Activated B cell treated with CpG ODN at 0.5 μM for 24 hours (primary cell): ENCODE measurements at regions of chr10 and their contacts with region 1.

Region 1: GRCh38 chr10:28381903-28382347 is 79.1 kb upstream of the MPP7 start:
- DNase-seq: peak; percentile 45
- ATAC-seq: peak; percentile 93
- H3K4me3 Mint-ChIP-seq: no peak overlapping the region
- H3K27ac Mint-ChIP-seq: no peak overlapping the region
- H3K4me1 Mint-ChIP-seq: peaks cover 6% of the 10 kb centered on the region
- H3K27me3 Mint-ChIP-seq: peaks cover 5% of the 10 kb centered on the region
- CTCF ChIP-seq: peak; percentile 66

Region 2: GRCh38 chr10:27446091-27446918 is 935.6 kb before region 1 on chr10:
- CTCF ChIA-PET with region 1: no interaction called
- POLR2A ChIA-PET with region 1: no interaction called
- intact Hi-C with region 1: loop called (anchors 1 kb)
- DNase-seq: no peak
- ATAC-seq: no peak
- H3K4me3 Mint-ChIP-seq: no peak overlapping the region
- H3K27ac Mint-ChIP-seq: no peak overlapping the region
- H3K4me1 Mint-ChIP-seq: peaks cover 2% of the 10 kb centered on the region
- H3K27me3 Mint-ChIP-seq: peaks cover 3% of the 10 kb centered on the region
- CTCF ChIP-seq: no peak

Region 3: GRCh38 chr10:27783660-27784059 is 598.3 kb before region 1 on chr10:
- CTCF ChIA-PET with region 1: interaction called, 4 read pairs
- POLR2A ChIA-PET with region 1: no interaction called
- intact Hi-C with region 1: loop called (anchors 2 kb)
- DNase-seq: no peak
- ATAC-seq: peak; percentile 54
- H3K4me3 Mint-ChIP-seq: no peak overlapping the region
- H3K27ac Mint-ChIP-seq: no peak overlapping the region
- H3K4me1 Mint-ChIP-seq: no peaks in the 10 kb centered on the region
- H3K27me3 Mint-ChIP-seq: peaks cover 8% of the 10 kb centered on the region
- CTCF ChIP-seq: no peak

Region 4: DNA sequence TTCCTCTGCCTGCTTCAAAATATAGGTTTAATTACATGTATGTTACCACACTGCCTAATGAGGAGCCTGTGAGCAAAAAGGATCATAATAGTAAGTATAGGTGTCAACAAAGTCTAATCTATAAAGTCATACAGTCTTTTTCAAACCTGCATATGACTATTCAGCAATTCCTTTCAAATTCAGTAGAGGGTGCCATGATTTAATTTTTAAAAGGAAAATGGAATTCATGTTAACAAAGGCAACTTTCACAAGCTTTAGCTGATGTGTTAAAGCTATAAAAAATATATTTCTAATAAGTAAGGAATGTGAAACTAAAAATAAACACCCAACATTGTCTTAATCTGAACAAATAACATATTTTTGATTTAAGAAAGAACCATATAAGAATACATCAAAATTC is 131.1 kb before region 1 on chr10:
- CTCF ChIA-PET with region 1: interaction called, 159 read pairs
- POLR2A ChIA-PET with region 1: interaction called, 3 read pairs
- intact Hi-C with region 1: loop called (anchors 1 kb)
- DNase-seq: no peak
- ATAC-seq: no peak
- H3K4me3 Mint-ChIP-seq: no peak overlapping the region
- H3K27ac Mint-ChIP-seq: no peak overlapping the region
- H3K4me1 Mint-ChIP-seq: no peaks in the 10 kb centered on the region
- H3K27me3 Mint-ChIP-seq: peaks cover 2% of the 10 kb centered on the region
- CTCF ChIP-seq: no peak

Region 5: GRCh38 chr10:28334296-28334695 is 47.6 kb before region 1 on chr10:
- CTCF ChIA-PET with region 1: interaction called, 6 read pairs
- POLR2A ChIA-PET with region 1: interaction called, 3 read pairs
- intact Hi-C with region 1: loop called (anchors 1 kb)
- DNase-seq: no peak
- ATAC-seq: peak; percentile 56
- H3K4me3 Mint-ChIP-seq: peak overlapping the region; percentile 79
- H3K27ac Mint-ChIP-seq: peak overlapping the region; percentile 97
- H3K4me1 Mint-ChIP-seq: peaks cover 46% of the 10 kb centered on the region
- H3K27me3 Mint-ChIP-seq: no peaks in the 10 kb centered on the region
- CTCF ChIP-seq: no peak

Region 6: GRCh38 chr10:28393966-28394568 is 12.1 kb after region 1 on chr10:
- CTCF ChIA-PET with region 1: interaction called, 40 read pairs
- POLR2A ChIA-PET with region 1: no interaction called
- intact Hi-C with region 1: no loop called
- DNase-seq: peak; percentile 30
- ATAC-seq: peak; percentile 56
- H3K4me3 Mint-ChIP-seq: no peak overlapping the region
- H3K27ac Mint-ChIP-seq: no peak overlapping the region
- H3K4me1 Mint-ChIP-seq: peaks cover 4% of the 10 kb centered on the region
- H3K27me3 Mint-ChIP-seq: peaks cover 4% of the 10 kb centered on the region
- CTCF ChIP-seq: peak; percentile 85

Region 7: DNA sequence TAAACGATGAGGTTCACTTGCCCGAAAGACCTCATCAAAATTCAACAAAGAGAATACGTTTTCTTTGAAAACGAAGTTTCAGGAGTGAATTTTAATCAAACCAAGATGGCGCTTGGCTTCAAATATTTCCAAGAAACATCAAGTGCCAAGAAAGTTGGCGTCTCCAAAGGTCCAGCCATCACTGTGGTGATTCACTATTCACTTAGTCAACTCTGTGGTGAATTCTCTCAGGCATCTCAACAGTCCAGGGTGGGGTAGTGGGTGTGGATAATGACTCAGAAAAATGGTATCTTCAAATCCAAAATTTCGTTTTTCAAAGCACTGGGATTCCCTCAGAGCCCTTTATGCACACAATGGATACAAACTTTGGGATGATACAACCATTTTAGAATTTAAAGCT is 1119.8 kb after region 1 on chr10:
- CTCF ChIA-PET with region 1: no interaction called
- POLR2A ChIA-PET with region 1: no interaction called
- intact Hi-C with region 1: no loop called
- DNase-seq: no peak
- ATAC-seq: no peak
- H3K4me3 Mint-ChIP-seq: no peak overlapping the region
- H3K27ac Mint-ChIP-seq: no peak overlapping the region
- H3K4me1 Mint-ChIP-seq: no peaks in the 10 kb centered on the region
- H3K27me3 Mint-ChIP-seq: peaks cover 11% of the 10 kb centered on the region
- CTCF ChIP-seq: no peak